Adrenal gland (tissue), 19 donors: ENCODE measurements at regions of chr15 and their contacts with region 1.

Region 1: GRCh38 chr15:44706946-44707636 is 4.0 kb downstream of the PATL2 start:
- DNase-seq: no peak
- H3K4me3 ChIP-seq: no peak overlapping the region
- H3K27ac ChIP-seq: no peak overlapping the region
- H3K4me1 ChIP-seq: peaks cover 0 to 4% of the 10 kb centered on the region in 2 donors
- H3K27me3 ChIP-seq: no peaks in the 10 kb centered on the region
- CTCF ChIP-seq: no peak
- POLR2A ChIP-seq: no peak

Region 2: GRCh38 chr15:44663409-44664308 is 43.4 kb before region 1 on chr15 and contains the start of gene SPG11:
- intact Hi-C with region 1: loop called in 1 of 2 experiments (anchors 5 kb)
- DNase-seq: peak; percentile 98 to 99 (median 99)
- H3K4me3 ChIP-seq: peak within 1 kb of the TSS; percentile 57 to 98 (median 83)
- H3K27ac ChIP-seq: peak within 1 kb of the TSS; percentile 94 to 99 (median 96)
- H3K4me1 ChIP-seq: peaks cover 9 to 20% of the 10 kb centered on the region in 2 donors
- H3K27me3 ChIP-seq: no peaks in the 10 kb centered on the region
- CTCF ChIP-seq: peak; percentile 87 to 99 (median 98)
- POLR2A ChIP-seq: peak; percentile 81 to 96
- total RNA-seq, gene SPG11: 48.5 to 122 (median 78.6) TPM